ENCODE measurements at regions of chr15 and their contacts with region 1.

Region 1: GRCh38 chr15:74768771-74769342 is 13.0 kb upstream of the CSK start:
- DNase-seq: peak in 28 of 35 experiments; percentile 34 to 76 (median 56)
- ATAC-seq: peak; percentile 56 to 66 (median 59)
- H3K4me3 ChIP-seq: no peak overlapping the region
- H3K4me3 Mint-ChIP-seq: no peak overlapping the region
- H3K27ac ChIP-seq: no peak overlapping the region
- H3K27ac Mint-ChIP-seq: peak overlapping the region in 1 of 2 donors; percentile 19
- H3K4me1 ChIP-seq: peaks cover 11 to 30% of the 10 kb centered on the region in 2 experiments
- H3K4me1 Mint-ChIP-seq: peaks cover 15 to 31% (median 20%) of the 10 kb centered on the region in 3 donors
- H3K27me3 ChIP-seq: peaks cover 0 to 21% of the 10 kb centered on the region in 2 experiments
- H3K27me3 Mint-ChIP-seq: peaks cover 0 to 5% of the 10 kb centered on the region in 2 donors

Region 2: GRCh38 chr15:74781431-74782258 is 12.8 kb after region 1 on chr15 and contains the start of gene CSK:
- CTCF ChIA-PET with region 1: interaction called, 3 to 93 read pairs
- POLR2A ChIA-PET with region 1: interaction called in 1 of 2 experiments, 3 read pairs
- DNase-seq: peak; percentile 53 to 92 (median 72)
- ATAC-seq: peak; percentile 66 to 76 (median 68)
- H3K4me3 ChIP-seq: peak within 1 kb of the TSS; percentile 90 to 95
- H3K4me3 Mint-ChIP-seq: peak within 1 kb of the TSS; percentile 93 to 97 (median 93)
- H3K27ac ChIP-seq: peak within 1 kb of the TSS; percentile 97
- H3K27ac Mint-ChIP-seq: peak within 1 kb of the TSS; percentile 99
- H3K4me1 ChIP-seq: peaks cover 50 to 89% of the 10 kb centered on the region in 2 experiments
- H3K4me1 Mint-ChIP-seq: peaks cover 78 to 83% (median 80%) of the 10 kb centered on the region in 3 donors
- H3K27me3 ChIP-seq: no peaks in the 10 kb centered on the region
- H3K27me3 Mint-ChIP-seq: no peaks in the 10 kb centered on the region
- total RNA-seq, gene CSK: 198 to 296 (median 271) TPM

Region 3: GRCh38 chr15:74793135-74794028 is 24.5 kb after region 1 on chr15:
- CTCF ChIA-PET with region 1: interaction called, 58 to 139 read pairs
- POLR2A ChIA-PET with region 1: interaction called, 4 to 5 read pairs
- DNase-seq: peak in 34 of 35 experiments; percentile 54 to 86 (median 74)
- ATAC-seq: peak; percentile 39 to 57 (median 50)
- H3K4me3 ChIP-seq: peak overlapping the region; percentile 20 to 42
- H3K4me3 Mint-ChIP-seq: peak overlapping the region; percentile 28 to 84 (median 57)
- H3K27ac ChIP-seq: peak overlapping the region; percentile 93
- H3K27ac Mint-ChIP-seq: peak overlapping the region; percentile 99 to 100
- H3K4me1 ChIP-seq: peaks cover 76 to 96% of the 10 kb centered on the region in 2 experiments
- H3K4me1 Mint-ChIP-seq: peaks cover 89 to 94% (median 91%) of the 10 kb centered on the region in 3 donors
- H3K27me3 ChIP-seq: no peaks in the 10 kb centered on the region
- H3K27me3 Mint-ChIP-seq: no peaks in the 10 kb centered on the region

Region 4: GRCh38 chr15:74906446-74907162 is 137.7 kb after region 1 on chr15 and contains the start of gene FAM219B:
- CTCF ChIA-PET with region 1: interaction called, 4 to 11 read pairs
- POLR2A ChIA-PET with region 1: no interaction called
- DNase-seq: peak; percentile 8 to 76 (median 52)
- ATAC-seq: peak; percentile 77 to 82 (median 78)
- H3K4me3 ChIP-seq: peak within 1 kb of the TSS; percentile 74 to 96
- H3K4me3 Mint-ChIP-seq: peak within 1 kb of the TSS; percentile 97 to 98 (median 98)
- H3K27ac ChIP-seq: peak within 1 kb of the TSS; percentile 78
- H3K27ac Mint-ChIP-seq: peak within 1 kb of the TSS; percentile 96 to 97
- H3K4me1 ChIP-seq: peaks cover 6 to 30% of the 10 kb centered on the region in 2 experiments
- H3K4me1 Mint-ChIP-seq: peaks cover 42 to 48% (median 46%) of the 10 kb centered on the region in 3 donors
- H3K27me3 ChIP-seq: no peaks in the 10 kb centered on the region
- H3K27me3 Mint-ChIP-seq: no peaks in the 10 kb centered on the region
- total RNA-seq, gene FAM219B: 46.0 to 108 (median 96.6) TPM

Measured in T-cell (primary cell).